HCT116 (cell line): ENCODE measurements at regions of chr17 and their contacts with region 1.

Region 1: GRCh38 chr17:51435641-51436091 is 175.3 kb downstream of the UTP18 start:
- DNase-seq: peak; percentile 85
- ATAC-seq: peak; percentile 97
- H3K4me3 ChIP-seq: no peak overlapping the region
- H3K27ac ChIP-seq: no peak overlapping the region
- H3K4me1 ChIP-seq: peaks cover 9 to 30% of the 10 kb centered on the region in 2 experiments; a peak in 3 of 4 replicates
- H3K27me3 ChIP-seq: no peaks in the 10 kb centered on the region
- CTCF ChIP-seq: peak; percentile 56 to 96 (median 96)
- POLR2A ChIP-seq: no peak
- RAD21 ChIP-seq: peak; percentile 51

Region 2: GRCh38 chr17:50129728-50130558 is 1305.7 kb before region 1 on chr17 and contains the start of gene SAMD14:
- CTCF ChIA-PET with region 1: no interaction called
- POLR2A ChIA-PET with region 1: no interaction called
- RAD21 ChIA-PET with region 1: no interaction called
- intact Hi-C with region 1: no loop called
- DNase-seq: no peak
- ATAC-seq: no peak
- H3K4me3 ChIP-seq: no peak within 1 kb of the TSS
- H3K27ac ChIP-seq: no peak within 1 kb of the TSS
- H3K4me1 ChIP-seq: peaks cover 16 to 32% of the 10 kb centered on the region in 2 experiments
- H3K27me3 ChIP-seq: no peaks in the 10 kb centered on the region
- CTCF ChIP-seq: no peak
- POLR2A ChIP-seq: no peak
- RAD21 ChIP-seq: no peak
- total RNA-seq, gene SAMD14: 1.5 TPM

Region 3: GRCh38 chr17:51419476-51419875 is 16.2 kb before region 1 on chr17:
- CTCF ChIA-PET with region 1: interaction called, 22 read pairs
- POLR2A ChIA-PET with region 1: interaction called, 3 read pairs
- RAD21 ChIA-PET with region 1: no interaction called
- intact Hi-C with region 1: no loop called
- DNase-seq: no peak
- ATAC-seq: no peak
- H3K4me3 ChIP-seq: no peak overlapping the region
- H3K27ac ChIP-seq: no peak overlapping the region
- H3K4me1 ChIP-seq: no peaks in the 10 kb centered on the region
- H3K27me3 ChIP-seq: peaks cover 58% of the 10 kb centered on the region
- CTCF ChIP-seq: no peak
- POLR2A ChIP-seq: no peak
- RAD21 ChIP-seq: no peak

Region 4: DNA sequence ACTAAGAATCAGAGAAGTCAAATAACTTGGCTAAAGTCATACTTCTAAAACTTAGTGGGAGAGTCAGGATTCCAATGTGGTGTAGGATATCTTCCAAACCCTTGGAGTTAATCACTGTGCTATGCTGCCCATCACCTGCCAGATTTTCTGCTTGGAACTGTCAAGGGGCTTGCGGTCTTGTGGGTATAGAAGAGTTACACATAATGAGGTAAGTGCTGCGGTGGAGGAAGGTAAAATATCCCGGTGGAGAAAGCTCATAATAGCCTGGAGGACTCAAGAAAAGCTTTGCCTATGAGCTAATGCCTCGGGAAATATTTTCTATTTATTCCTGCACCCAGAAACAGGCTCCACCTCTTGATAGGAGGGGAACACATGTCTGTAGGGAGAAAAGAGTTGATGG is 20.3 kb after region 1 on chr17:
- CTCF ChIA-PET with region 1: interaction called, 32 read pairs
- POLR2A ChIA-PET with region 1: interaction called, 4 read pairs
- RAD21 ChIA-PET with region 1: no interaction called
- intact Hi-C with region 1: no loop called
- DNase-seq: no peak
- ATAC-seq: no peak
- H3K4me3 ChIP-seq: no peak overlapping the region
- H3K27ac ChIP-seq: no peak overlapping the region
- H3K4me1 ChIP-seq: no peaks in the 10 kb centered on the region
- H3K27me3 ChIP-seq: 0 out of 2 replicates have a peak, but pooled peaks cover 3% of the 10 kb centered on the region
- CTCF ChIP-seq: no peak
- POLR2A ChIP-seq: no peak
- RAD21 ChIP-seq: no peak

Region 5: GRCh38 chr17:51461578-51462004 is 25.9 kb after region 1 on chr17:
- CTCF ChIA-PET with region 1: interaction called, 32 read pairs
- POLR2A ChIA-PET with region 1: interaction called, 4 read pairs
- RAD21 ChIA-PET with region 1: no interaction called
- intact Hi-C with region 1: no loop called
- DNase-seq: peak; percentile 78
- ATAC-seq: peak; percentile 97
- H3K4me3 ChIP-seq: no peak overlapping the region
- H3K27ac ChIP-seq: no peak overlapping the region
- H3K4me1 ChIP-seq: peaks cover 0 to 4% of the 10 kb centered on the region in 2 experiments; a peak in 1 of 4 replicates
- H3K27me3 ChIP-seq: peaks cover 16% of the 10 kb centered on the region
- CTCF ChIP-seq: peak; percentile 63 to 100 (median 100); a peak in 5 of 6 replicates
- POLR2A ChIP-seq: no peak
- RAD21 ChIP-seq: peak; percentile 72

Region 6: DNA sequence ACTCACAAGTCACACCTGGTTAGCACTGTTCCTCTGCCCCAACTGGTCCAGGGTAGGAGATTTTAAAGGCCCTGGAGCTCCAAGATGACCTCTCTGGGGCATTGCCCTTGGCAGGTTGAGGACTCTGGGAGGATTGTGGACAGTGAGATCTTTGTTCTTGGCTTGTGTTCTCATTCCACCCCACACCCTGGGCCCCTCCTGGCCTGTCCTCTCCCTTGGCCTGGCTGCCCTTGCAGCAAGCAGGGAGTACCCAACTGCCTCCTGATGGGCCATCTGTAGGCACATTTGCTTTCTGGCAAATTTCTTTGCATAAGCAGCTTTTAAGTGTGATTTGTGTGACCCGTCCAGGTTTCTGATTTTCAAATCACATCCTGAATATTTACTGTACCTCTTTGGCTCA is 64.2 kb after region 1 on chr17:
- CTCF ChIA-PET with region 1: no interaction called
- POLR2A ChIA-PET with region 1: no interaction called
- RAD21 ChIA-PET with region 1: no interaction called
- intact Hi-C with region 1: no loop called
- DNase-seq: no peak
- ATAC-seq: no peak
- H3K4me3 ChIP-seq: no peak overlapping the region
- H3K27ac ChIP-seq: no peak overlapping the region
- H3K4me1 ChIP-seq: no peaks in the 10 kb centered on the region
- H3K27me3 ChIP-seq: peaks cover 56% of the 10 kb centered on the region
- CTCF ChIP-seq: no peak
- POLR2A ChIP-seq: no peak
- RAD21 ChIP-seq: no peak

Region 7: DNA sequence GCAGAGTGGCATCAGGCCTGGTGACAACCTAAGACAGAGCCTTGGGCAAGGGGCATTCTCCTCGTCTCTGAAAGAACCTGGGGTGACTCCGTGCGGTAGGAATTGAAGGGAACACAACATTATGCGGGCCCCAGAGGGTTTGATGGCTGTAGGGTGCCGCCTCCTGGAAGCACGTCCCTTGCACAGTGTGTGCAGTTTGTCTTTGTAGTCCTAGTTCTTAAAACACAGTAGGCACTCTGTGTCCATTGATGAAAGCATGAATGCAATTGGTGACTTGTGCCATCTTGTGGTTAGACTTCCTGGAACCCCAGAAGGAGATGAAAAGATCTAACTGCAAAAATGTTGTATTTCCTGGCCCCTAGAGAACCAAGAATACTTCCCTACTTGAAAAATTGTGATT is 104.5 kb after region 1 on chr17:
- CTCF ChIA-PET with region 1: no interaction called
- POLR2A ChIA-PET with region 1: no interaction called
- RAD21 ChIA-PET with region 1: no interaction called
- intact Hi-C with region 1: no loop called
- DNase-seq: peak; percentile 26
- ATAC-seq: peak; percentile 78
- H3K4me3 ChIP-seq: no peak overlapping the region
- H3K27ac ChIP-seq: no peak overlapping the region
- H3K4me1 ChIP-seq: no peaks in the 10 kb centered on the region
- H3K27me3 ChIP-seq: peaks cover 8% of the 10 kb centered on the region; the same call in 1 of the 2 replicates
- CTCF ChIP-seq: peak; percentile 15 to 70 (median 38); a peak in 3 of 6 replicates
- POLR2A ChIP-seq: no peak
- RAD21 ChIP-seq: peak; percentile 67